ENCODE measurements at regions of chr1 and their contacts with region 1.

Region 1: DNA sequence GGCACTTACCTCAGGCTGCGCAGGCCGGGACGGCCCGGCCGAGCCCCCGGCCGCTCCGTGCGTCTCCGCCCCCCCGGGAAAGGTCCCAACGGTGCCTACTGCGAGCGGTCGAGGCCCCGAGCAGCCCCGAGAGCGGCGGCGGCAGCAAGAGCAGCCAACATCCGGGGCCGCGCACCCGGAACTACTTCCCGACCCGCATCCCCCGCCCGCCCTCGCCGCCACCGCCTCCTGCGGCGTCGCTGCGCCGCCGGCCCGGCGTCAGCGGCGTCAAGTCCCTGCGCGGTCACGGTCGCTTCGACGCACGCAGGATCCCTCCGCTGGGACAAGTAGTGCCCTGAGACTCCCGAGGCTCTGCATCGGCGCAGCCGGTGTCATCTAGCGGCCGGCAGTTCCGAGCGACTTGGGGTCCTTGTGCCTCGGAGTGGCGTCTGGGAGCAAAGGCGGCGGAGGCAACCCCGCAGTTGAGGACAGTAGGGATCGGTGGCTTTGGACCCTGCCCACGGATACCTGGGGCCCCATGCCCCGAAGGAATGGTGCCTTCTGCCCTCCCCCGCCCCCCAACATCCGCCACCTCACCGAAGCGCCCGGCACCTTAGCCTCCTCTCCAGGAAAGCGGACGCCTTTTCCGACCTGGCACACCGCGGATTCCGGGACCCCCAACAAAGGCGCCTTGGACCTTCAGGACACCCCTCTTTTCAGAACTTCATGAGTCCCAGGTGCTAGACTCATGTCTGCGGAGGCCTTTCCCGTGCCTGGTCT is at the start of gene FOXJ3:
- H3K4me3 ChIP-seq: peak within 1 kb of the TSS; percentile 87
- H3K27ac ChIP-seq: peak within 1 kb of the TSS; percentile 85
- H3K4me1 ChIP-seq: peaks cover 8% of the 10 kb centered on the region
- CTCF ChIP-seq: peak; percentile 85

Region 2: GRCh38 chr1:42157667-42158066 is 177.6 kb before region 1 on chr1:
- CTCF ChIA-PET with region 1: no interaction called
- POLR2A ChIA-PET with region 1: interaction called, 10 read pairs
- H3K4me3 ChIP-seq: no peak overlapping the region
- H3K27ac ChIP-seq: no peak overlapping the region
- H3K4me1 ChIP-seq: no peaks in the 10 kb centered on the region
- CTCF ChIP-seq: peak; percentile 57